Activated CD4-positive, alpha-beta memory T cell treated with anti-CD3 and anti-CD28 coated beads for 36 hours (primary cell): ENCODE measurements at regions of chr1 and their contacts with region 1.

Region 1: GRCh38 chr1:116724765-116725375 is 29.4 kb upstream of the CD2 start:
- DNase-seq: peak; percentile 84
- H3K4me3 Mint-ChIP-seq: no peak overlapping the region
- H3K27ac Mint-ChIP-seq: peak overlapping the region; percentile 64
- H3K4me1 Mint-ChIP-seq: peaks cover 28% of the 10 kb centered on the region
- H3K27me3 Mint-ChIP-seq: no peaks in the 10 kb centered on the region

Region 2: GRCh38 chr1:116386042-116386441 is 338.8 kb before region 1 on chr1:
- CTCF ChIA-PET with region 1: no interaction called
- POLR2A ChIA-PET with region 1: no interaction called
- intact Hi-C with region 1: no loop called
- DNase-seq: no peak
- H3K4me3 Mint-ChIP-seq: no peak overlapping the region
- H3K27ac Mint-ChIP-seq: no peak overlapping the region
- H3K4me1 Mint-ChIP-seq: peaks cover 74% of the 10 kb centered on the region
- H3K27me3 Mint-ChIP-seq: no peaks in the 10 kb centered on the region

Region 3: DNA sequence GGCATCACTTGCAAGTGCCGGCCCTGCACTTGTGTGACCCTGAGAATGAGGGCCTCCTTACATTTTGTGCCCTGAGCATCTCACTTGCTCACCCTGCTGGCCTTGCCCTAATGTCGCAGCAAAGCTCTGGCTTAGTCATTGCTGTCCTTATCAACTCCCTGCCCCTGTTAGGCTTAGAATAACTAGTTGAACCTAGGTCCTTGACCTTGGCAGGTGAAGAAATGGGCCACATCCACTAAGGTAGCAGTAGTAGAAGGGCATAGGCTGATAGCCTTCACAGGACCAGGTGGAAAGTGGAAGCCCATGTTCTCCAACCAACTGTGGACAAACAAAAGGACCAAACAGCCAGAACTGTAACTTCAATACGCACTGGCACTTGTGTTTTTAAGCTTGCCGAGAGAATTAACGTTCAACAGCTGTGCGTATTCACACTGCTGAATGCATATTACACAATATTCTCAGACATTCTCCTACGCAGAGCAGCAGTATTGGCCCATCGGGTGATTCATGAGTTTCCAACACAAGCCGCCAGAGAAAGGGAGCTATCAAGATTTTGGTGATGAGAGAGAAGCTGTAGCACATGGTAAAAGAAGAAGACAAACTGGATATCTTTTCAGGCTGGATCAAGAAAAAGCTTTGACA is 157.1 kb after region 1 on chr1:
- CTCF ChIA-PET with region 1: interaction called, 5 read pairs
- POLR2A ChIA-PET with region 1: no interaction called
- intact Hi-C with region 1: loop called (anchors 2 kb)
- DNase-seq: peak; percentile 66
- H3K4me3 Mint-ChIP-seq: no peak overlapping the region
- H3K27ac Mint-ChIP-seq: no peak overlapping the region
- H3K4me1 Mint-ChIP-seq: peaks cover 19% of the 10 kb centered on the region
- H3K27me3 Mint-ChIP-seq: no peaks in the 10 kb centered on the region